ENCODE measurements at regions of chr20 and their contacts with region 1.

Region 1: GRCh38 chr20:45329510-45330319 is 18.5 kb downstream of the SDC4 start:
- DNase-seq: no peak
- ATAC-seq: no peak

Region 2: GRCh38 chr20:45111799-45112471 is 217.8 kb before region 1 on chr20:
- intact Hi-C with region 1: no loop called
- DNase-seq: no peak
- ATAC-seq: no peak

Region 3: GRCh38 chr20:45373353-45374100 is 43.8 kb after region 1 on chr20:
- intact Hi-C with region 1: loop called (anchors 5 kb)
- DNase-seq: peak; percentile 92
- ATAC-seq: peak; percentile 93